Activated naive CD4-positive, alpha-beta T cell treated with anti-CD3 and anti-CD28 coated beads, Interleukin-2, amount 10 ng/mL, durations not matched to agents 7 days and 5 days (primary cell): ENCODE measurements at regions of chr3 and their contacts with region 1.

Region 1: GRCh38 chr3:167684388-167684993 is 30.7 kb upstream of the WDR49 start:
- DNase-seq: peak; percentile 43
- H3K4me3 Mint-ChIP-seq: no peak overlapping the region
- H3K27ac Mint-ChIP-seq: no peak overlapping the region
- H3K4me1 Mint-ChIP-seq: no peaks in the 10 kb centered on the region
- H3K27me3 Mint-ChIP-seq: no peaks in the 10 kb centered on the region

Region 2: DNA sequence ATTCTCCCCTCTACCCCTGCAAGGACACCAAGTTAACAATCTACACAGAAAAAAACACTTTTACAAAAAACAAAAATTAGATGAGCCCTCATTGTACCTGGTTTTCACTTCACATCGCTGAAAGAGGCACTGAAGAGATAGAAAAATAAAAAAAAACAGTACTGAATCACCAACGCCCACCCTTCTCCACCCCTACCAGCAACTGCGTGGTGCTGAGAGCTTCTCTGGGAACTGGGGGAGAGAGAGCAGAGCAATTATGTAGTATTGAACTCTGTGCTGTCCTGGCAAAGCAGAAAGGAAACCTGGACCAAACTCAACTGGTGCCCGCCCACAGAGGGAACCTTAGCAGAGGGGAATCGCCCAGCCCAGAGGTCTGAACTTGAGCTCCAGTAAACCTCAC is 75.3 kb before region 1 on chr3:
- CTCF ChIA-PET with region 1: no interaction called
- DNase-seq: no peak
- H3K4me3 Mint-ChIP-seq: no peak overlapping the region
- H3K27ac Mint-ChIP-seq: no peak overlapping the region
- H3K4me1 Mint-ChIP-seq: no peaks in the 10 kb centered on the region
- H3K27me3 Mint-ChIP-seq: no peaks in the 10 kb centered on the region

Region 3: DNA sequence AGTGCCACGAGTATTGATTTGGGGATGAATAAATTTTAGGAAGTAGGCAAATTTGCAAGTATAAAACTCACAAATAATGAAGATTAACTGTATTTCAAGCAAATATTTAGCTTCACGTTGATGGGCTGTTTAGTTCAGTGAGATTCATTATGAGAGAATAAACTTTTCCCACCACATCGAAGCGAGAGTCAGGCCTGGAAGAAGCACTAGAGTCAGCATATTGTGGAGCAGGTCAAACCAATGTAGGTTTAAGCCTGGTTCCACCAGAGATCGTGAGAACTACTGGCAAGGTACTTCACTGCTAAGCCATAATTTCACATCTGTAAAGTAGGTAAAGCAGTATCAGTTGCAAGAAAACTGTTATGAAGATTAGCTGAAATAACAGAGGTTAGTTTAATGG is 53.0 kb before region 1 on chr3:
- CTCF ChIA-PET with region 1: no interaction called
- DNase-seq: no peak
- H3K4me3 Mint-ChIP-seq: no peak overlapping the region
- H3K27ac Mint-ChIP-seq: no peak overlapping the region
- H3K4me1 Mint-ChIP-seq: no peaks in the 10 kb centered on the region
- H3K27me3 Mint-ChIP-seq: no peaks in the 10 kb centered on the region

Region 4: GRCh38 chr3:167669699-167670098 is 14.8 kb before region 1 on chr3:
- CTCF ChIA-PET with region 1: interaction called, 15 read pairs
- DNase-seq: no peak
- H3K4me3 Mint-ChIP-seq: no peak overlapping the region
- H3K27ac Mint-ChIP-seq: no peak overlapping the region
- H3K4me1 Mint-ChIP-seq: no peaks in the 10 kb centered on the region
- H3K27me3 Mint-ChIP-seq: no peaks in the 10 kb centered on the region